ENCODE measurements at regions of chr17 and their contacts with region 1.

Region 1: GRCh38 chr17:43170766-43171585 is at the start of gene NBR1:
- H3K4me3 Mint-ChIP-seq: no peak within 1 kb of the TSS
- H3K27ac Mint-ChIP-seq: no peak within 1 kb of the TSS
- H3K4me1 Mint-ChIP-seq: peaks cover 22% of the 10 kb centered on the region
- H3K27me3 Mint-ChIP-seq: no peaks in the 10 kb centered on the region

Region 2: GRCh38 chr17:43024407-43025289 is 146.3 kb before region 1 on chr17 and contains the start of gene RND2:
- intact Hi-C with region 1: loop called (anchors 2 kb)
- H3K4me3 Mint-ChIP-seq: peak within 1 kb of the TSS; percentile 79
- H3K27ac Mint-ChIP-seq: peak within 1 kb of the TSS; percentile 83
- H3K4me1 Mint-ChIP-seq: peaks cover 42% of the 10 kb centered on the region
- H3K27me3 Mint-ChIP-seq: peaks cover 16% of the 10 kb centered on the region

Region 3: DNA sequence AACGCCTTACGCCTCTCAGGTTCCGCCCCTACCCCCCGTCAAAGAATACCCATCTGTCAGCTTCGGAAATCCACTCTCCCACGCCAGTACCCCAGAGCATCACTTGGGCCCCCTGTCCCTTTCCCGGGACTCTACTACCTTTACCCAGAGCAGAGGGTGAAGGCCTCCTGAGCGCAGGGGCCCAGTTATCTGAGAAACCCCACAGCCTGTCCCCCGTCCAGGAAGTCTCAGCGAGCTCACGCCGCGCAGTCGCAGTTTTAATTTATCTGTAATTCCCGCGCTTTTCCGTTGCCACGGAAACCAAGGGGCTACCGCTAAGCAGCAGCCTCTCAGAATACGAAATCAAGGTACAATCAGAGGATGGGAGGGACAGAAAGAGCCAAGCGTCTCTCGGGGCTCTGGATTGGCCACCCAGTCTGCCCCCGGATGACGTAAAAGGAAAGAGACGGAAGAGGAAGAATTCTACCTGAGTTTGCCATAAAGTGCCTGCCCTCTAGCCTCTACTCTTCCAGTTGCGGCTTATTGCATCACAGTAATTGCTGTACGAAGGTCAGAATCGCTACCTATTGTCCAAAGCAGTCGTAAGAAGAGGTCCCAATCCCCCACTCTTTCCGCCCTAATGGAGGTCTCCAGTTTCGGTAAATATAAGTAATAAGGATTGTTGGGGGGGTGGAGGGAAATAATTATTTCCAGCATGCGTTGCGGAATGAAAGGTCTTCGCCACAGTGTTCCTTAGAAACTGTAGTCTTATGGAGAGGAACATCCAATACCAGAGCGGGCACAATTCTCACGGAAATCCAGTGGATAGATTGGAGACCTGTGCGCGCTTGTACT is 45.6 kb before region 1 on chr17 and contains the start of gene BRCA1:
- intact Hi-C with region 1: loop called (anchors 1 kb)
- H3K4me3 Mint-ChIP-seq: peak within 1 kb of the TSS; percentile 96
- H3K27ac Mint-ChIP-seq: peak within 1 kb of the TSS; percentile 76
- H3K4me1 Mint-ChIP-seq: peaks cover 49% of the 10 kb centered on the region
- H3K27me3 Mint-ChIP-seq: no peaks in the 10 kb centered on the region

Region 4: GRCh38 chr17:43211480-43212402 is 40.8 kb after region 1 on chr17 and contains the start of gene TMEM106A:
- intact Hi-C with region 1: loop called (anchors 1 kb)
- H3K4me3 Mint-ChIP-seq: peak within 1 kb of the TSS; percentile 99
- H3K27ac Mint-ChIP-seq: peak within 1 kb of the TSS; percentile 100
- H3K4me1 Mint-ChIP-seq: peaks cover 49% of the 10 kb centered on the region
- H3K27me3 Mint-ChIP-seq: no peaks in the 10 kb centered on the region